Right cardiac atrium (tissue), 5 donors: ENCODE measurements at regions of chr9 and their contacts with region 1.

Region 1: GRCh38 chr9:100411472-100412283 is 15.3 kb upstream of the MSANTD3 start:
- DNase-seq: peak; percentile 93 to 96 (median 94)
- ATAC-seq: peak; percentile 99 to 100
- H3K4me3 ChIP-seq: peak overlapping the region; percentile 44
- H3K27ac ChIP-seq: no peak overlapping the region
- H3K4me1 ChIP-seq: no peaks in the 10 kb centered on the region
- H3K27me3 ChIP-seq: no peaks in the 10 kb centered on the region

Region 2: GRCh38 chr9:100352727-100353505 is 58.8 kb before region 1 on chr9 and contains the start of gene TEX10:
- intact Hi-C with region 1: loop called in 1 of 4 experiments (anchors 10 kb)
- DNase-seq: peak; percentile 91 to 96 (median 96)
- ATAC-seq: peak; percentile 98 to 99
- H3K4me3 ChIP-seq: peak within 1 kb of the TSS; percentile 76
- H3K27ac ChIP-seq: peak within 1 kb of the TSS; percentile 4
- H3K4me1 ChIP-seq: peaks cover 2% of the 10 kb centered on the region
- H3K27me3 ChIP-seq: no peaks in the 10 kb centered on the region
- total RNA-seq, gene TEX10: 8.7 to 10.4 (median 8.8) TPM

Region 3: DNA sequence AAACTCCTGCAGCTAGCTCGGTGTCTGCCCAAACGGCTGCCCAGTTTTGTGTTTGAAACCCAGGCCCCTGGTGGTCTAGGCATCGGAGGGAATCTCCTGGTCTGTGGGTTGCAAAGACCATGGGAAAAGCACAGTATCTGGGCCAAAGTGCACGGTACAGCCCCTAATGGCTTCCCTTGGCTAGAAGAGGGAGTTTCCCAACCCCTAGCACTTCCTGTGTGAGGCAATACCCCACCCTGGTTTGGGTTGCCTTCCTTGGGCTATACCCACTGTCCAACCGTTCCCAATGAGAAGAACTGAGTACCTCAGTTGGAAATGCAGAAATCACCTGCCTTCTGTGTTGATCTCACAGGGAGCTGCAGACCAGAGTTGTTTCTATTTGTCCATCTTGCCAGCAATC is 208.0 kb after region 1 on chr9:
- intact Hi-C with region 1: no loop called
- DNase-seq: no peak
- ATAC-seq: no peak
- H3K4me3 ChIP-seq: no peak overlapping the region
- H3K27ac ChIP-seq: no peak overlapping the region
- H3K4me1 ChIP-seq: no peaks in the 10 kb centered on the region
- H3K27me3 ChIP-seq: no peaks in the 10 kb centered on the region